Heart right ventricle (tissue), 16 donors: ENCODE measurements at regions of chr2 and their contacts with region 1.

Region 1: GRCh38 chr2:230219419-230220331 is at the start of gene SP110:
- DNase-seq: peak; percentile 75 to 84
- ATAC-seq: peak; percentile 93 to 98 (median 96)
- H3K4me3 ChIP-seq: peak within 1 kb of the TSS; percentile 48 to 80 (median 66)
- H3K27ac ChIP-seq: peak within 1 kb of the TSS; percentile 35 to 90 (median 81)
- H3K4me1 ChIP-seq: peaks cover 0 to 44% (median 24%) of the 10 kb centered on the region in 9 donors
- H3K27me3 ChIP-seq: no peaks in the 10 kb centered on the region
- CTCF ChIP-seq: no peak
- total RNA-seq, gene SP110: 7.6 to 38.6 (median 10.4) TPM

Region 2: DNA sequence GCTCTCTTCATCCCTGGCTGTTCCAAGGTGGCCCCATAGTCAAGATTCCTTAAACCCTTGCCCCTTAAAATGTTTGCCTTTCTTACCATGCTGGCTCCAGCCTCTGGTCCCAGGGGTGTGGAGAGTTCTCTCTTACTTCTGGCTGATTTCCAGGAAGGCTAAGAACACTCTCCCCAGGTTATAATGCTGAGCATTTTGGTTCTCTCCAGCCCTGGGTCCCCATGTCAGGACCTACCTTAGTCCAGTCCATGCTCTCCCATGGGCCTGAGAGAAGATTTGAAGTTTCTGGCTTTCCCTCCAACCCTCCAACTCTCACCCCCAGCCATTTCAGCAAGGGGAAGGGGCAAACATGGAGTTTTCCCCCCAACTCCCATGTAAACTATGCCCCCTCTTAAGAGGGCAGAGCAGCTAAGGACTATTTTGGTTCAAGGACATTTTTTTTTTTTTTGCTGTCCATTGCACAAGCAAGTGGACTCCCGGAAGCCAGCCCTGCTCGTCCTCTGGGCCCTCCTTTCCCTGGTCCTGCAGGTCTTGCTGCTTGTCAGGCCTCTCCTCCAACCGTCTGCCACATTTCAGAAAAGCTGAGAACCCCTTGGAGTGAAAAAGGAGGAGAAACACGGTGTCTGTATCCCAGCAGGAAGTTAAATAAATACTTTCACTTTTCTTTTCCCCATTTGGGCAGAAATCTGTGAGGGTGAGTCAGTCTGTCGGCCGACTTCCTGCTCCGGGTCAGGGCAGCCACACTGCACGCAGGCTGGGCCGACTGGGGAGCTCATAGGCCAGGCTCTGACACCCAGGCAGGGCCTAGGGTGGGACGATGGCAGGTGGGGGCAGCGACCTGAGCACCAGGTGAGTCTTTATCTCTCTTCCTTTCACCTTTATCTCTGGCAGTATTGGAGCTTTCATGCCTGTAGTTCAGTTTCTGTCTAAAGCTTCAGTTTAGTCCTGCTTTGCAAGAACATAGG is 107.1 kb after region 1 on chr2 and contains the start of gene SP140L:
- intact Hi-C with region 1: loop called in 2 of 10 experiments (anchors 5 to 10 kb)
- DNase-seq: peak; percentile 69 to 75
- ATAC-seq: peak; percentile 89 to 97 (median 96)
- H3K4me3 ChIP-seq: peak within 1 kb of the TSS; percentile 9 to 65 (median 54)
- H3K27ac ChIP-seq: peak within 1 kb of the TSS in 9 of 10 donors; percentile 54 to 97 (median 83)
- H3K4me1 ChIP-seq: peaks cover 0 to 41% (median 19%) of the 10 kb centered on the region in 9 donors
- H3K27me3 ChIP-seq: no peaks in the 10 kb centered on the region
- CTCF ChIP-seq: no peak
- total RNA-seq, gene SP140L: 3.0 to 10.8 (median 4.4) TPM

Region 3: DNA sequence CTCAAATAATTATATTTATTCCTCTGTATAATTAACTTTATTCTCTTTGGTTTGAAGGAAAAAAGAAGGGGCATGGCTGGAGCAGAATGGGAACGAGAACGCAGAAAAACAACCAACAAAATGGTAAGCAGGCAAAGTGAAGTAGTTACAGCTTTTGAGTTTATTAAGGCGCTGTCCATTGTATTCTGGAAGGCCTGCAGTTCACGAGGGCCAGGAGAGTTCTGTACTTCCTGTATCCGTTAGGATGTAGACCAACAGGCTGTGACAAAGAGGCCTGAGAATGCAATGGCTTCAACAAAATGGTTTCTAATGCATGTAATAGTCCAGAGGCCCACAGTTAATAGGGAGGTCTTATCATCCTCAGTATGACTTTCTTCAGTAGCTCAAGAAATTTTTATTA is 163.8 kb after region 1 on chr2:
- intact Hi-C with region 1: loop called in 1 of 10 experiments (anchors 10 kb)
- DNase-seq: no peak
- ATAC-seq: no peak
- H3K4me3 ChIP-seq: no peak overlapping the region
- H3K27ac ChIP-seq: no peak overlapping the region
- H3K4me1 ChIP-seq: peaks cover 0 to 11% (median 0%) of the 10 kb centered on the region in 9 donors
- H3K27me3 ChIP-seq: no peaks in the 10 kb centered on the region
- CTCF ChIP-seq: no peak